HepG2 (cell line): ENCODE measurements at regions of chr11 and their contacts with region 1.

Region 1: GRCh38 chr11:447923-448731 is 2.0 kb upstream of the PTDSS2 start:
- DNase-seq: peak; percentile 85
- ATAC-seq: peak; percentile 58
- H3K4me3 ChIP-seq: peak overlapping the region; percentile 53 to 89 (median 56)
- H3K27ac ChIP-seq: peak overlapping the region; percentile 73
- H3K4me1 ChIP-seq: peaks cover 69% of the 10 kb centered on the region
- H3K27me3 ChIP-seq: no peaks in the 10 kb centered on the region; a peak in 1 of 5 replicates
- CTCF ChIP-seq: peak; percentile 99
- EP300 ChIP-seq: no peak
- POLR2A ChIP-seq: peak in 1 of 2 experiments; percentile 51; a peak in 2 of 4 replicates
- RAD21 ChIP-seq: peak; percentile 94

Region 2: GRCh38 chr11:396948-397548 is 51.1 kb before region 1 on chr11:
- CTCF ChIA-PET with region 1: interaction called, 5 read pairs
- POLR2A ChIA-PET with region 1: interaction called, 19 read pairs
- in situ Hi-C with region 1: no loop called
- intact Hi-C with region 1: no loop called
- DNase-seq: peak; percentile 63
- ATAC-seq: peak; percentile 81
- H3K4me3 ChIP-seq: peak overlapping the region; percentile 33 to 68 (median 54); a peak in 5 of 6 replicates
- H3K27ac ChIP-seq: peak overlapping the region; percentile 44
- H3K4me1 ChIP-seq: peaks cover 53% of the 10 kb centered on the region
- H3K27me3 ChIP-seq: no peaks in the 10 kb centered on the region; a peak in 1 of 5 replicates
- CTCF ChIP-seq: peak; percentile 93
- EP300 ChIP-seq: no peak
- POLR2A ChIP-seq: no peak
- RAD21 ChIP-seq: peak; percentile 90

Region 3: DNA sequence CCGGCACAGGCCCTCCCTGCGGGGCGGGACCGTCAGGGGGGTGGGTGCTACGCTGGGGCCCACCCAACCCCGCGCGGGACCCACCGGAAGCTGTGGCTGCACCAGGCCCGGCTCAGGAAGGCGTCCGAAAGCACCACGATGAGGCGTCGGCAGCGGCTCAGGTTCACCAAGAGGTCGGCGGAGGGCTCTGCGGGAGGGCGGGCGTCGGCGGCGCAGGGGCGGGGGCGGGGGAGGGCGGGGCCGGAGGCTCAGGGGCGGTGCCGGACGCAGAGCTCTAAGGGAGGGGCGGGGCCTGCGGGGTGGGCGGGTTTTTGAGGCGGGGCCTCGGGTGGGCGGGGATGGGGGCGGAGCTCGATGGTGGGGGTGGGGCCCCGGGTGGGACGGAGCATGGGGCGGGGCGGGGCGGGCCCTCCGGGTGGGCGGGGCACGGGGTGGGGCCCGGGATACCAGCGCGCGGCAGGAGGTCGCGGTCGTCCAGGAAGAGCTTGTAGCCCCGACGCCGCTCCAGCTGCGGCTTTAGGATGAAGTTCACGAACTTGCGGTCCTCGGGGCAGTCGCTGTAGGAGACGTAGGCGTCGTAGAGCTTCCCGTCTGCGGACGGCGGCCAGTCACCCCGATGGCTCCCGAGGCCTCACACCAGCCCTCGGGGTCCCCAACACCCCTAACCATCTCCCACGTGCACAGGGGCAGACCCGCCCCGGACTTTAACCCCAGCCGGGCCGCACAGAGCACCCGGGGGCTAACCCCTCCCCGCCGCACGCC is 41.0 kb before region 1 on chr11:
- CTCF ChIA-PET with region 1: interaction called, 3 read pairs
- POLR2A ChIA-PET with region 1: interaction called, 31 read pairs
- in situ Hi-C with region 1: loop called (anchors 5 kb)
- intact Hi-C with region 1: loop called (anchors 5 kb)
- DNase-seq: no peak
- ATAC-seq: no peak
- H3K4me3 ChIP-seq: no peak overlapping the region
- H3K27ac ChIP-seq: no peak overlapping the region
- H3K4me1 ChIP-seq: peaks cover 32% of the 10 kb centered on the region
- H3K27me3 ChIP-seq: no peaks in the 10 kb centered on the region
- CTCF ChIP-seq: no peak
- EP300 ChIP-seq: no peak
- POLR2A ChIP-seq: no peak
- RAD21 ChIP-seq: no peak

Region 4: GRCh38 chr11:416757-417621 is 31.1 kb before region 1 on chr11:
- CTCF ChIA-PET with region 1: no interaction called
- POLR2A ChIA-PET with region 1: interaction called, 31 read pairs
- in situ Hi-C with region 1: no loop called
- intact Hi-C with region 1: no loop called
- DNase-seq: no peak
- ATAC-seq: peak; percentile 28
- H3K4me3 ChIP-seq: peak overlapping the region; percentile 25 to 67 (median 57); a peak in 5 of 6 replicates
- H3K27ac ChIP-seq: no peak overlapping the region
- H3K4me1 ChIP-seq: peaks cover 39% of the 10 kb centered on the region
- H3K27me3 ChIP-seq: peaks cover 2 to 10% of the 10 kb centered on the region in 2 experiments; a peak in 1 of 5 replicates
- CTCF ChIP-seq: no peak; the same call in 1 of the 2 replicates
- EP300 ChIP-seq: no peak
- POLR2A ChIP-seq: no peak
- RAD21 ChIP-seq: no peak

Region 5: DNA sequence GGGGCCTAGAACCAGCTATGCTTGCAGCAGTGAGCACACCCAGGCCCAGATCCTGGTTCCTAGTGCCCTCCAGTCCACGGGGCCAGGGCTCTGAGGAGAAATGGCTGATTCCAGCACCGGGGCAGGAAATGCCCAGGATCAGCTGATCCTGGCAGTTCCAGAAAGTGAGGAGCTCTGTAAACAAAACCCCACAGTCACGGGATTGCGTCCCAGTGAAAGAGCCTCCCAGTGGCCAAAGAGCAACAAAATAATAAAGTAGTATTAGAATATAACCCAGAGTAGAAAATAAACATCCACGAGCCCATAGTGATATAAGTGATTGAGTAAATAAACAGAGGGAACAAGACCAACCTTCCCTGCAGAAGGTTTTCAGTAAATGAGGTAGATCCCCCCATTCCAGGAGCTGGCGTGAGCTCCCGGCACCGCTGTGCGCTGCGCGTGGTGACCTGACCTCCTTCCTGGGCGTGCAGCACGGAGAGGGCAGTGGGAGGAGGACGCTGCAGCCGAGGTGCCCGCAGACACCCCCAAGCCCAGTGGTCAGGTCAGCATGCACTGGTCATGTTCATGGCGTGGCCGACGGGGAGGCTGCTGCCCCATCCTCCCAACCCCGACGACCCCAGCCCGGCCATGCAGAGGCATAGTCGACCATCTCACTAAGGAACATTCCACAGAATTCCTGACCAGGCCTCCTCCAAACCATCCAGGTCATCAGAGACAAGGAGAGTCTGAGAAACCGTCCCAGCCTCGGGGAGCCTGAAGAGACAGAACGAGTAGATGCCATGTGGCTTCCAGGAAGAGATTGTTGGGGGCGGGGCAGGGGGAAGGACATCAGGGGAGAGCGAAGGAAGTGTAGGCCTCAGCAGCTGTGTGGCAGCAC is 21.8 kb after region 1 on chr11:
- CTCF ChIA-PET with region 1: no interaction called
- POLR2A ChIA-PET with region 1: interaction called, 10 read pairs
- in situ Hi-C with region 1: no loop called
- intact Hi-C with region 1: no loop called
- DNase-seq: peak; percentile 83
- ATAC-seq: peak; percentile 89
- H3K4me3 ChIP-seq: peak overlapping the region; percentile 32 to 71 (median 43)
- H3K27ac ChIP-seq: peak overlapping the region; percentile 90
- H3K4me1 ChIP-seq: peaks cover 19% of the 10 kb centered on the region
- H3K27me3 ChIP-seq: no peaks in the 10 kb centered on the region
- CTCF ChIP-seq: peak; percentile 38; the same call in 1 of the 2 replicates
- EP300 ChIP-seq: peak in 1 of 2 experiments; percentile 52; a peak in 2 of 4 replicates
- POLR2A ChIP-seq: peak; percentile 65 to 66
- RAD21 ChIP-seq: no peak

Region 6: DNA sequence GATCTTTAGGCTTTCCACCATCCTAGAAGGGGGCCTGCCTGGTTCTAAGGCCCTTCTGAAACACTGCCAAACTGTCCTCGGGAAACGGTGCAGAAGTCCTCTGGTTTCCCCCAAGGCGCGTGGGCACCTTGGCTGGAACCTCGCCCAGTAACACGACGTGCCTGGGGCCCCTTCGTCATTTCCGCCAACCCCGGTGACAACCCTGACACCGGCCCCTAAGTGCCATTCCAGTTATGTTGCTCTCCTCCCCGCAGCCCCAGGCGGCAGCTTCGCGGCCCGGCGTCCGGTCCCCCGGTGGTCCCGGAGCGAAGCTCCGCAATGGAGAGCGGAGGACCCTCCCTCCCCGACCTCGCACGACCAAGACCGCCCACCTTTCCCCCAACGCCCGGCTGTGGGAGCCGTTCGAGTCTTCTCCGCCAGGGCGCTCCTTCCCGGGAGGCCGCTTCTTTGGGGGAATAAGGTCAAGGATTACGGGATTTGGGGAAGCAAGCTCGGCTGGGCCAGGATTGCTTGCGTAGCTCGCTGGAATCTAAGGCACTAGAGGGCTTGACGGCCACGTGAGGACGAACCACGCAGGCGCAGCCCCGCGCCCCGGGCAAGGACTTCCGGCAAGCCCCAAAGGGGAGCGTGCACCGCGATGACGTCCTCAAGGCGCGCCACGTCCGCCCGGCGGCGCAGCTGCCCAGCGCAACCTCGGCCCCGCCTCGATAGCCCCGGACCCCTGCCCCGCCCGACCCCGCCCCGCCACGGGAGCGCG is 58.3 kb after region 1 on chr11:
- CTCF ChIA-PET with region 1: no interaction called
- POLR2A ChIA-PET with region 1: interaction called, 13 read pairs
- in situ Hi-C with region 1: no loop called
- intact Hi-C with region 1: no loop called
- DNase-seq: peak; percentile 88
- ATAC-seq: peak; percentile 86
- H3K4me3 ChIP-seq: peak overlapping the region; percentile 70 to 99 (median 96)
- H3K27ac ChIP-seq: peak overlapping the region; percentile 98
- H3K4me1 ChIP-seq: peaks cover 21% of the 10 kb centered on the region
- H3K27me3 ChIP-seq: no peaks in the 10 kb centered on the region
- CTCF ChIP-seq: no peak
- EP300 ChIP-seq: peak in 1 of 2 experiments; percentile 63; a peak in 2 of 4 replicates
- POLR2A ChIP-seq: peak; percentile 60 to 61; a peak in 3 of 4 replicates
- RAD21 ChIP-seq: no peak

Region 7: GRCh38 chr11:518463-519250 is 70.5 kb after region 1 on chr11:
- CTCF ChIA-PET with region 1: interaction called, 20 read pairs
- POLR2A ChIA-PET with region 1: interaction called, 4 read pairs
- in situ Hi-C with region 1: no loop called
- intact Hi-C with region 1: no loop called
- DNase-seq: peak; percentile 90
- ATAC-seq: peak; percentile 96
- H3K4me3 ChIP-seq: peak overlapping the region in 2 of 3 experiments; percentile 22 to 41; a peak in 4 of 6 replicates
- H3K27ac ChIP-seq: peak overlapping the region; percentile 72
- H3K4me1 ChIP-seq: peaks cover 37% of the 10 kb centered on the region
- H3K27me3 ChIP-seq: no peaks in the 10 kb centered on the region
- CTCF ChIP-seq: peak; percentile 90
- EP300 ChIP-seq: no peak
- POLR2A ChIP-seq: no peak
- RAD21 ChIP-seq: peak; percentile 99

Region 8: GRCh38 chr11:2012440-2012839 is 1564.3 kb after region 1 on chr11:
- CTCF ChIA-PET with region 1: no interaction called
- POLR2A ChIA-PET with region 1: no interaction called
- in situ Hi-C with region 1: no loop called
- intact Hi-C with region 1: no loop called
- DNase-seq: no peak
- ATAC-seq: no peak
- H3K4me3 ChIP-seq: no peak overlapping the region
- H3K27ac ChIP-seq: no peak overlapping the region
- H3K4me1 ChIP-seq: no peaks in the 10 kb centered on the region
- H3K27me3 ChIP-seq: no peaks in the 10 kb centered on the region
- CTCF ChIP-seq: no peak
- EP300 ChIP-seq: no peak
- POLR2A ChIP-seq: no peak
- RAD21 ChIP-seq: no peak